ENCODE measurements at regions of chr16 and their contacts with region 1.

Region 1: DNA sequence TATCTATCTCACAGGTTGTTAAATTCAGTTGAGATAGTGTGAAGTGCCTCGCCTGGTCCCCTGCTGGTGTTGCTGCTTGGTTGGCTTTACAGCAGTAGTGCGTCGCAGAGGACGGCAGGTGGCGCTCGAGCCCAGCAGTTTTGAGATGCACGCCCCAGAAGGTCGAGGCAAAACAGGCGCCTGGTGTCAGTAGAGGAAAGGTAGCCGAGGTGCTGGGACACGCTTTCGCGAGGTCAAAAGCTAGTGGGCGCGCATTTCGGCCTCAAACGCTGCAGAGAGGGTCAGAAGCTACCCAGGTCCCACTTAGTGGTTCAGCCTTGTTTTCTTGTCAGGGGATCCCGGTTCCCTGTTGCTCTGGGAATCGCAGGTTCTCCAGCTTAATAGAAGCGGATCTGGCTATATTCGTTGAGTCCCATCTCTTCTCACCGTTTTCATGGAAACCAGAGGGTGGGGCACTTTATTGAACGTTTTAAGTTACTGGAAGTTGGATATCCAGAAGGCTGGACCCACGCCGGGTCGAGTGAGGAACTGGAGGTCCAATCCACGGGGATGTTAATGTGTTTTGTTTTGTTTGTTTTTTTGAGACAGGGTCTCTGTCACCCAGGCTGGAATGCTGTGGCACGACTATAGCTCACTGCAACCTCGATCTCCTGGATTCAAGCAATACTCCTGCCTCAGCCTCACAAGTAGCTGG is 10.3 kb upstream of the ZFP90 start:
- DNase-seq: peak; percentile 84 to 93 (median 90)
- ATAC-seq: peak; percentile 80
- H3K4me3 ChIP-seq: no peak overlapping the region
- H3K4me3 Mint-ChIP-seq: peak overlapping the region; percentile 72
- H3K27ac ChIP-seq: no peak overlapping the region
- H3K27ac Mint-ChIP-seq: peak overlapping the region; percentile 28
- H3K4me1 ChIP-seq: peaks cover 21% of the 10 kb centered on the region
- H3K4me1 Mint-ChIP-seq: peaks cover 23% of the 10 kb centered on the region
- H3K27me3 ChIP-seq: no peaks in the 10 kb centered on the region
- H3K27me3 Mint-ChIP-seq: no peaks in the 10 kb centered on the region
- CTCF ChIP-seq: peak; percentile 94

Region 2: GRCh38 chr16:68040507-68041288 is 488.1 kb before region 1 on chr16:
- CTCF ChIA-PET with region 1: no interaction called
- POLR2A ChIA-PET with region 1: no interaction called
- intact Hi-C with region 1: no loop called
- DNase-seq: peak; percentile 84 to 98 (median 90)
- ATAC-seq: peak; percentile 99
- H3K4me3 ChIP-seq: no peak overlapping the region
- H3K4me3 Mint-ChIP-seq: no peak overlapping the region
- H3K27ac ChIP-seq: peak overlapping the region in 1 of 2 experiments; percentile 7
- H3K27ac Mint-ChIP-seq: peak overlapping the region; percentile 45
- H3K4me1 ChIP-seq: peaks cover 6% of the 10 kb centered on the region
- H3K4me1 Mint-ChIP-seq: peaks cover 11% of the 10 kb centered on the region
- H3K27me3 ChIP-seq: no peaks in the 10 kb centered on the region
- H3K27me3 Mint-ChIP-seq: no peaks in the 10 kb centered on the region
- CTCF ChIP-seq: peak; percentile 88

Region 3: GRCh38 chr16:68590201-68590994 is 61.6 kb after region 1 on chr16:
- CTCF ChIA-PET with region 1: interaction called, 112 read pairs
- POLR2A ChIA-PET with region 1: no interaction called
- intact Hi-C with region 1: loop called (anchors 1 to 5 kb)
- DNase-seq: peak; percentile 6 to 66 (median 62)
- ATAC-seq: peak; percentile 83
- H3K4me3 ChIP-seq: no peak overlapping the region
- H3K4me3 Mint-ChIP-seq: no peak overlapping the region
- H3K27ac ChIP-seq: no peak overlapping the region
- H3K27ac Mint-ChIP-seq: no peak overlapping the region
- H3K4me1 ChIP-seq: no peaks in the 10 kb centered on the region
- H3K4me1 Mint-ChIP-seq: peaks cover 2% of the 10 kb centered on the region
- H3K27me3 ChIP-seq: no peaks in the 10 kb centered on the region
- H3K27me3 Mint-ChIP-seq: no peaks in the 10 kb centered on the region
- CTCF ChIP-seq: peak; percentile 52

Region 4: GRCh38 chr16:68629351-68629910 is 100.6 kb after region 1 on chr16:
- CTCF ChIA-PET with region 1: no interaction called
- POLR2A ChIA-PET with region 1: no interaction called
- intact Hi-C with region 1: loop called in 1 of 2 experiments (anchors 1 kb)
- DNase-seq: peak in 3 of 9 experiments; percentile 7 to 46 (median 21)
- ATAC-seq: peak; percentile 56
- H3K4me3 ChIP-seq: no peak overlapping the region
- H3K4me3 Mint-ChIP-seq: no peak overlapping the region
- H3K27ac ChIP-seq: no peak overlapping the region
- H3K27ac Mint-ChIP-seq: no peak overlapping the region
- H3K4me1 ChIP-seq: no peaks in the 10 kb centered on the region
- H3K4me1 Mint-ChIP-seq: no peaks in the 10 kb centered on the region
- H3K27me3 ChIP-seq: no peaks in the 10 kb centered on the region
- H3K27me3 Mint-ChIP-seq: peaks cover 6% of the 10 kb centered on the region
- CTCF ChIP-seq: no peak

Region 5: GRCh38 chr16:68655806-68656205 is 127.0 kb after region 1 on chr16:
- CTCF ChIA-PET with region 1: no interaction called
- POLR2A ChIA-PET with region 1: no interaction called
- intact Hi-C with region 1: no loop called
- DNase-seq: no peak
- ATAC-seq: no peak
- H3K4me3 ChIP-seq: no peak overlapping the region
- H3K4me3 Mint-ChIP-seq: no peak overlapping the region
- H3K27ac ChIP-seq: no peak overlapping the region
- H3K27ac Mint-ChIP-seq: no peak overlapping the region
- H3K4me1 ChIP-seq: no peaks in the 10 kb centered on the region
- H3K4me1 Mint-ChIP-seq: no peaks in the 10 kb centered on the region
- H3K27me3 ChIP-seq: no peaks in the 10 kb centered on the region
- H3K27me3 Mint-ChIP-seq: peaks cover 17% of the 10 kb centered on the region
- CTCF ChIP-seq: no peak

Region 6: GRCh38 chr16:68800257-68800875 is 271.5 kb after region 1 on chr16:
- CTCF ChIA-PET with region 1: interaction called, 8 read pairs
- POLR2A ChIA-PET with region 1: no interaction called
- intact Hi-C with region 1: loop called in 1 of 2 experiments (anchors 2 kb)
- DNase-seq: peak in 7 of 9 experiments; percentile 6 to 61 (median 41)
- ATAC-seq: peak; percentile 62
- H3K4me3 ChIP-seq: no peak overlapping the region
- H3K4me3 Mint-ChIP-seq: no peak overlapping the region
- H3K27ac ChIP-seq: no peak overlapping the region
- H3K27ac Mint-ChIP-seq: no peak overlapping the region
- H3K4me1 ChIP-seq: no peaks in the 10 kb centered on the region
- H3K4me1 Mint-ChIP-seq: no peaks in the 10 kb centered on the region
- H3K27me3 ChIP-seq: no peaks in the 10 kb centered on the region
- H3K27me3 Mint-ChIP-seq: no peaks in the 10 kb centered on the region
- CTCF ChIP-seq: peak; percentile 29

Region 7: DNA sequence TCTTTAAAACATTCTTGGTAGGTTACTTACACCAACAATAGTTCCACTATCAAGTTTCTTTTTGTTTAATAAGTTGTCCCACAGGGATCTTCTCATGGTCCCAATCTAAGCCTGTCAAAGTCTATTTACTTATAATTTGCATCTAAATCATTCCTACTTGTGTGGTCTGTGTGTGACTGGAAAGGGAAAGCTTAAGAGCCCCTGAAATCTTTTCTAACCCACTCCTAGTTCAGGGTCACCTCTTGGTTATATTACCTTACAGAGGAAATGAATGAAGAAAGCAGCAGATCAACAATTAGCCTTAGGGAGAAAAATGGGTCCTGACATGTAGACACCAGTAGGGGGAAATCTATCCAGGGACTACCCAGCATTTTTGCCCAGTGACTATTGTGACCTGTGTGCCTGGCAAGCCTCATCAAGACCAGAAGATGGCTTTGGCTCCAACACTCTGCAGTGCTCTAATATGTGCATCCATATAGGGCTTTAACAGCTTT is 466.2 kb after region 1 on chr16:
- CTCF ChIA-PET with region 1: no interaction called
- POLR2A ChIA-PET with region 1: no interaction called
- intact Hi-C with region 1: loop called in 1 of 2 experiments (anchors 10 kb)
- DNase-seq: no peak
- ATAC-seq: no peak
- H3K4me3 ChIP-seq: no peak overlapping the region
- H3K4me3 Mint-ChIP-seq: no peak overlapping the region
- H3K27ac ChIP-seq: no peak overlapping the region
- H3K27ac Mint-ChIP-seq: no peak overlapping the region
- H3K4me1 ChIP-seq: no peaks in the 10 kb centered on the region
- H3K4me1 Mint-ChIP-seq: no peaks in the 10 kb centered on the region
- H3K27me3 ChIP-seq: no peaks in the 10 kb centered on the region
- H3K27me3 Mint-ChIP-seq: no peaks in the 10 kb centered on the region
- CTCF ChIP-seq: no peak

Region 8: GRCh38 chr16:69310653-69311532 is 782.1 kb after region 1 on chr16 and contains the start of gene VPS4A:
- CTCF ChIA-PET with region 1: no interaction called
- POLR2A ChIA-PET with region 1: no interaction called
- intact Hi-C with region 1: loop called in 1 of 2 experiments (anchors 10 kb)
- DNase-seq: peak; percentile 96 to 99 (median 98)
- ATAC-seq: peak; percentile 98
- H3K4me3 ChIP-seq: peak within 1 kb of the TSS; percentile 66 to 79
- H3K4me3 Mint-ChIP-seq: peak within 1 kb of the TSS; percentile 99
- H3K27ac ChIP-seq: peak within 1 kb of the TSS; percentile 72 to 82
- H3K27ac Mint-ChIP-seq: peak within 1 kb of the TSS; percentile 95
- H3K4me1 ChIP-seq: peaks cover 17% of the 10 kb centered on the region
- H3K4me1 Mint-ChIP-seq: peaks cover 27% of the 10 kb centered on the region
- H3K27me3 ChIP-seq: no peaks in the 10 kb centered on the region
- H3K27me3 Mint-ChIP-seq: no peaks in the 10 kb centered on the region
- CTCF ChIP-seq: peak; percentile 73
- total RNA-seq, gene VPS4A: 64.2 to 66.5 TPM